ENCODE measurements at regions of chr1 and their contacts with region 1.

Region 1: DNA sequence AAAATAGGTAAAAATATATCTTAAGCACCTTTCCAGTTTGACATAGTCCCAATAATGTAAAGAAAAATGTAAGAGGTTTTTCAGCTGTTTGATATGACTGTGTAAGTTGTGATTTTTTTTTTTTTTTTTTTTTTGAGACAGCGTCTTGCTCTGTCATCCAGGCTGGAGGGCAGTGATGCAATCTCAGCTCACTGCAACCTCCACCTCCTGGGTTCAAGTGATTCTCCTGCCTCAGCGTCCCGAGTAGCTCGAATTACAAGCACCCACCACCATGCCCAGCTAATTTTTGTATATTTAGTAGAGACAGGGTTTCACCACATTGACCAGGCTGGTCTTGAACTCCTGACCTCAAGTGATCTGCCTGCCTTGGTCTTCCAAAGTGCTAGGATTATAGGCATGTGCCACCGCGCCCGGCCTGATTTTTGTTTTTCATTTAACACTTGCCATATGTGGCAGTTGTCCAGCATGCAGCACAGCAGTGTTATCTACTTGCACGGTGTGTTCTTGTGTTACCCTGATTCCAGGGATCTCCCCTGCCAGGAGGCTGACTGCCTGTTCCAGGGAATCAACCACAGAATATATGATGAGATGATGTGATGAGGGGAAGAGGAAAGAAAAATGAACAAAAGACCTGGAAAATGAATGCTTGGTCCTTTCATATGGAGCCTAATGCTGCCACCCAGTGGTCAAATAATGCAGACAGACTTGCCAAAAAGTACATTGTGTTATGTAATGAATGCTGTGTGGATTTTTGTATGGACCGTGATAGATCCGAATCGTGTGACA is 79.0 kb downstream of the RAVER2 start:
- DNase-seq: peak; percentile 39 to 72 (median 50)
- H3K4me3 ChIP-seq: no peak overlapping the region
- H3K4me3 Mint-ChIP-seq: peak overlapping the region in 5 of 7 donors; percentile 4 to 54 (median 49)
- H3K27ac ChIP-seq: no peak overlapping the region
- H3K27ac Mint-ChIP-seq: peak overlapping the region in 5 of 8 donors; percentile 1 to 77 (median 61)
- H3K4me1 ChIP-seq: peaks cover 12% of the 10 kb centered on the region
- H3K4me1 Mint-ChIP-seq: peaks cover 30 to 36% (median 36%) of the 10 kb centered on the region in 3 donors
- H3K27me3 ChIP-seq: no peaks in the 10 kb centered on the region
- H3K27me3 Mint-ChIP-seq: no peaks in the 10 kb centered on the region

Region 2: GRCh38 chr1:64685217-64685616 is 138.7 kb before region 1 on chr1:
- CTCF ChIA-PET with region 1: interaction called, 19 read pairs
- POLR2A ChIA-PET with region 1: no interaction called
- DNase-seq: no peak
- H3K4me3 ChIP-seq: no peak overlapping the region
- H3K4me3 Mint-ChIP-seq: no peak overlapping the region
- H3K27ac ChIP-seq: no peak overlapping the region
- H3K27ac Mint-ChIP-seq: no peak overlapping the region
- H3K4me1 ChIP-seq: no peaks in the 10 kb centered on the region
- H3K4me1 Mint-ChIP-seq: no peaks in the 10 kb centered on the region
- H3K27me3 ChIP-seq: no peaks in the 10 kb centered on the region
- H3K27me3 Mint-ChIP-seq: peaks cover 0 to 12% of the 10 kb centered on the region in 2 donors